ENCODE measurements at regions of chr4 and their contacts with region 1.

Region 1: GRCh38 chr4:69025191-69025998 is 70.9 kb upstream of the UGT2B7 start:
- DNase-seq: no peak
- ATAC-seq: peak; percentile 92
- H3K4me3 ChIP-seq: no peak overlapping the region
- H3K27ac ChIP-seq: no peak overlapping the region
- H3K4me1 ChIP-seq: no peaks in the 10 kb centered on the region
- H3K27me3 ChIP-seq: no peaks in the 10 kb centered on the region
- CTCF ChIP-seq: peak; percentile 19 to 54 (median 30); a peak in 4 of 6 replicates
- EP300 ChIP-seq: no peak
- POLR2A ChIP-seq: no peak
- RAD21 ChIP-seq: peak; percentile 57

Region 2: GRCh38 chr4:68518889-68519288 is 506.5 kb before region 1 on chr4:
- CTCF ChIA-PET with region 1: no interaction called
- POLR2A ChIA-PET with region 1: no interaction called
- RAD21 ChIA-PET with region 1: no interaction called
- SMC1A ChIA-PET with region 1: no interaction called
- in situ Hi-C with region 1: loop called (anchors 25 kb)
- intact Hi-C with region 1: no loop called
- DNase-seq: no peak
- ATAC-seq: no peak
- H3K4me3 ChIP-seq: no peak overlapping the region
- H3K27ac ChIP-seq: no peak overlapping the region
- H3K4me1 ChIP-seq: no peaks in the 10 kb centered on the region
- H3K27me3 ChIP-seq: no peaks in the 10 kb centered on the region
- CTCF ChIP-seq: no peak
- EP300 ChIP-seq: no peak
- POLR2A ChIP-seq: no peak
- RAD21 ChIP-seq: no peak

Region 3: DNA sequence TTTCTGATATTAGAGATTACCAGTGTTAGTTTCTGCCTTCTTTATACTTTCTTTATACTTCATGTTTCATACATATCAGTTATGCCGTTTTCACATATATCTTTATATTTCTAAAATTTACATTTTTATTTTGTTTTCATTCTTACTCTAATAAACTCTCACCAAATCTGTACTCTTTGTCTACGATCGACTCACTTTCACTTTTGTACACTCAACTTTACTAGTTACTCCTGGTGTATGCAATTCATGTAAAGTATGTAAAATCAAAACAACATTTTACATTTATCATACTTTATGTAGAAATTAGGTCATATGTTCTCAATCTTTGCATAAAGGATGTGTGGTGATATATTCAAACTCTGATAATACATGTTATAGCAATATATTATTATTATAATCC is 133.7 kb before region 1 on chr4:
- CTCF ChIA-PET with region 1: no interaction called
- POLR2A ChIA-PET with region 1: no interaction called
- RAD21 ChIA-PET with region 1: no interaction called
- SMC1A ChIA-PET with region 1: no interaction called
- in situ Hi-C with region 1: no loop called
- intact Hi-C with region 1: no loop called
- DNase-seq: no peak
- ATAC-seq: no peak
- H3K4me3 ChIP-seq: no peak overlapping the region
- H3K27ac ChIP-seq: no peak overlapping the region
- H3K4me1 ChIP-seq: no peaks in the 10 kb centered on the region
- H3K27me3 ChIP-seq: no peaks in the 10 kb centered on the region
- CTCF ChIP-seq: no peak
- EP300 ChIP-seq: no peak
- POLR2A ChIP-seq: no peak
- RAD21 ChIP-seq: no peak

Region 4: GRCh38 chr4:69038582-69038981 is 13.2 kb after region 1 on chr4:
- CTCF ChIA-PET with region 1: interaction called, 4 read pairs
- POLR2A ChIA-PET with region 1: interaction called, 3 read pairs
- RAD21 ChIA-PET with region 1: interaction called, 3 read pairs
- SMC1A ChIA-PET with region 1: interaction called, 18 read pairs
- in situ Hi-C with region 1: no loop called
- intact Hi-C with region 1: no loop called
- DNase-seq: no peak
- ATAC-seq: peak; percentile 42; the same call in 2 of the 3 replicates
- H3K4me3 ChIP-seq: no peak overlapping the region
- H3K27ac ChIP-seq: no peak overlapping the region
- H3K4me1 ChIP-seq: no peaks in the 10 kb centered on the region
- H3K27me3 ChIP-seq: no peaks in the 10 kb centered on the region
- CTCF ChIP-seq: no peak
- EP300 ChIP-seq: no peak
- POLR2A ChIP-seq: no peak
- RAD21 ChIP-seq: no peak

Region 5: GRCh38 chr4:69051576-69051943 is 26.2 kb after region 1 on chr4:
- CTCF ChIA-PET with region 1: interaction called, 8 read pairs
- POLR2A ChIA-PET with region 1: interaction called, 8 read pairs
- RAD21 ChIA-PET with region 1: interaction called, 22 read pairs
- SMC1A ChIA-PET with region 1: interaction called, 26 read pairs
- in situ Hi-C with region 1: no loop called
- intact Hi-C with region 1: no loop called
- DNase-seq: no peak
- ATAC-seq: peak; percentile 23
- H3K4me3 ChIP-seq: no peak overlapping the region
- H3K27ac ChIP-seq: no peak overlapping the region
- H3K4me1 ChIP-seq: no peaks in the 10 kb centered on the region
- H3K27me3 ChIP-seq: no peaks in the 10 kb centered on the region
- CTCF ChIP-seq: no peak
- EP300 ChIP-seq: no peak
- POLR2A ChIP-seq: no peak
- RAD21 ChIP-seq: no peak